PC-9 (cell line): ENCODE measurements at regions of chr6 and their contacts with region 1.

Region 1: DNA sequence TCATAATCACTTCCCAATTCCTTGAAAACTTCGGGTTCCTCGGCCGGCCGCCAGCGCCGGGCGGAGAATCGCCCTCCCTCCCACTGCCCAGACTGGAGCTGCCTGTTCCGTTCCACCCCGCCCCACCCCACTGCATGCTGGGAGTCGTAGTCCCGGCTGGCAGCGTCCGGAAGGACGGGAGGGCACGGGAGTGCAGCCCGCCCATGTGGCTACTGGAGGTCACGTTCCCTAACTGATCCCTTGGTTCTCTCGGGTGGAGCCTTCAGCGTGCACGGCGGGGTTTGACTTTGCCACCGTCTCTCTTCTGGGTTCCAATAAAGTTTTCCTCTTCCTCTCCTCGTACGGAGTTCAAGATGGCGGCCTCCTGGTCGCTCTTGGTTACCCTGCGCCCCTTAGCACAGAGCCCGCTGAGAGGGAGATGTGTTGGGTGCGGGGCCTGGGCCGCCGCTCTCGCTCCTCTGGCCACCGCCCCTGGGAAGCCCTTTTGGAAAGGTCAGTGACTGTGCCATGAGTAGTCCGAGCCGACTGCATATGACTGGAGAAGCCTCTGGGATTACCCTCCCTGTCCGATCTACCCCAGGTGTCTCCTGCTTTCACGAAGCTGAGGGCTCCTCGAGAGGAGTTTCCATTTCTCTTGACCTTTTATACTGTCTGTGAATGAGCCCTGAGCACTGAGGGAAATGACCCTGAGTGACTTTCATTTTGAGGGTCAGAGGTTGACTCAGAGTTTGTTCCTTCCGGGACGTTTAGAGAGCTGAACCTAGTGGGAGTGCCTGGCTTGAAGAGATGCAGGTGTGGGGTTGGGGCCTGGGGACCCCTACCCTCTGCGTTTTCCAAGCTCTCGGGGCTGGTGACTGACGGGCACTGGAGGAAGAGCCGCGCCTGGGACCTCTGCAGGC is at the start of gene AFG1L:
- DNase-seq: peak; percentile 84 to 93
- H3K4me3 ChIP-seq: peak within 1 kb of the TSS; percentile 80
- H3K27ac ChIP-seq: peak within 1 kb of the TSS; percentile 83
- H3K4me1 ChIP-seq: peaks cover 7% of the 10 kb centered on the region
- H3K27me3 ChIP-seq: no peaks in the 10 kb centered on the region
- CTCF ChIP-seq: no peak
- total RNA-seq, gene AFG1L: 8.9 and 13.4 TPM in 2 replicates

Region 2: GRCh38 chr6:107602321-107603035 is 692.5 kb before region 1 on chr6:
- CTCF ChIA-PET with region 1: no interaction called
- POLR2A ChIA-PET with region 1: interaction called, 20 read pairs
- intact Hi-C with region 1: no loop called
- DNase-seq: peak in 1 of 2 experiments; percentile 9
- H3K4me3 ChIP-seq: no peak overlapping the region
- H3K27ac ChIP-seq: no peak overlapping the region
- H3K4me1 ChIP-seq: peaks cover 20% of the 10 kb centered on the region
- H3K27me3 ChIP-seq: no peaks in the 10 kb centered on the region
- CTCF ChIP-seq: no peak

Region 3: DNA sequence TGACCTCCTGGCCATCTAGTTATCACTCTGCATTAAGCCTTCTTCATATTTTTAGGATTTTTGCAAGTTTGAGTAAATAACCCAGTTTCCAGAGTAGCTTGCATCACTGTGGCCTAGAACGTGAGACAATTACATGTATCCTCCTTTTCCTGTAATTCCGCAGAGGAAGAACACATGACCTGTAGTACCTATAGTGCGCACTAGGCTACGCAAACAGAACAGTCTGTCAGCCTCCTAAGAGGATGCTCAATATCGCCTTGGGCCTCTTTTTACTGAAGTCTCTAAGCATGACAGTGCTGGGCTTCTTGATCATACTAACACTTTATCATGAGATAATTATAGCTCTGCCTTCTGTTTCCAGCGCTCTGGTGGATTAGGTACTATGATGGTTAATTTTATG is 149.3 kb before region 1 on chr6:
- CTCF ChIA-PET with region 1: no interaction called
- POLR2A ChIA-PET with region 1: no interaction called
- intact Hi-C with region 1: no loop called
- DNase-seq: no peak
- H3K4me3 ChIP-seq: no peak overlapping the region
- H3K27ac ChIP-seq: no peak overlapping the region
- H3K4me1 ChIP-seq: no peaks in the 10 kb centered on the region
- H3K27me3 ChIP-seq: no peaks in the 10 kb centered on the region
- CTCF ChIP-seq: no peak